Heart right ventricle (tissue), 16 donors: ENCODE measurements at regions of chr1 and their contacts with region 1.

Region 1: GRCh38 chr1:174982971-174983689 is 16.6 kb upstream of the CACYBP start:
- DNase-seq: no peak
- ATAC-seq: no peak
- H3K4me3 ChIP-seq: no peak overlapping the region
- H3K27ac ChIP-seq: no peak overlapping the region
- H3K4me1 ChIP-seq: no peaks in the 10 kb centered on the region
- H3K27me3 ChIP-seq: no peaks in the 10 kb centered on the region
- CTCF ChIP-seq: peak; percentile 42 to 80 (median 73)

Region 2: GRCh38 chr1:173476664-173477285 is 1506.4 kb before region 1 on chr1:
- intact Hi-C with region 1: loop called in 1 of 10 experiments (anchors 5 kb)
- DNase-seq: peak; percentile 91 to 92
- ATAC-seq: peak; percentile 89 to 96 (median 91)
- H3K4me3 ChIP-seq: peak overlapping the region; percentile 56 to 95 (median 90)
- H3K27ac ChIP-seq: peak overlapping the region; percentile 64 to 99 (median 96)
- H3K4me1 ChIP-seq: peaks cover 4 to 76% (median 46%) of the 10 kb centered on the region in 9 donors
- H3K27me3 ChIP-seq: no peaks in the 10 kb centered on the region
- CTCF ChIP-seq: peak in 3 of 9 donors; percentile 9 to 36 (median 20)

Region 3: DNA sequence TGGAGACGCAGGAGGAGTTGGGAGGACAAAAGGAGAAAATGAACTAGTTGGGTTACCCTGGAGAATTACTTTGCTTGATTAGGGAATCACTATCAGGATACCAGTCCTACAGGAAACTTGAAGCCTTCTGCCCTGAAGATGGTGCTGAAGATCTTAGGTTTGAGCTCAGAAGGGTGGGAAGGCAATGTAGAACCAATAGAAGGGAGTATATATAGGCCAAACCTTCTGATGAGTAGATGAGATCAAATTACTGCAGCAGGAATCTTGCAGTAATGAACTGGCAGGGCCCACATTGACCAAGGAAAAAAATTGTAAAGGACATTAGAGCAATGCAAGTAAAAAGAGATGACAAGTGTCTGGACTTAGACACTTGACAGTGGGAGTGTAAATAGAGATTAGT is 99.7 kb before region 1 on chr1:
- intact Hi-C with region 1: loop called in 1 of 10 experiments (anchors 10 kb)
- DNase-seq: no peak
- ATAC-seq: peak in 3 of 8 donors; percentile 33 to 42 (median 35)
- H3K4me3 ChIP-seq: no peak overlapping the region
- H3K27ac ChIP-seq: no peak overlapping the region
- H3K4me1 ChIP-seq: peaks cover 6 to 20% (median 16%) of the 10 kb centered on the region in 9 donors
- H3K27me3 ChIP-seq: no peaks in the 10 kb centered on the region
- CTCF ChIP-seq: peak in 1 of 9 donors; percentile 14